ENCODE measurements at regions of chr1 and their contacts with region 1.

Region 1: GRCh38 chr1:147236959-147237826 is 5.3 kb upstream of the CHD1L start:
- DNase-seq: no peak
- H3K4me3 ChIP-seq: no peak overlapping the region
- H3K27ac ChIP-seq: no peak overlapping the region
- H3K4me1 ChIP-seq: peaks cover 6 to 17% of the 10 kb centered on the region in 2 donors
- H3K27me3 ChIP-seq: no peaks in the 10 kb centered on the region
- CTCF ChIP-seq: no peak
- POLR2A ChIP-seq: no peak

Region 2: GRCh38 chr1:147172168-147172992 is 64.8 kb before region 1 on chr1 and contains the start of gene PRKAB2:
- intact Hi-C with region 1: loop called (anchors 5 kb)
- DNase-seq: peak; percentile 97 to 98
- H3K4me3 ChIP-seq: peak within 1 kb of the TSS; percentile 77 to 90 (median 79)
- H3K27ac ChIP-seq: peak within 1 kb of the TSS; percentile 78 to 95 (median 92)
- H3K4me1 ChIP-seq: peaks cover 8 to 18% of the 10 kb centered on the region in 2 donors
- H3K27me3 ChIP-seq: no peaks in the 10 kb centered on the region
- CTCF ChIP-seq: peak; percentile 68 to 97 (median 92)
- POLR2A ChIP-seq: peak in 1 of 2 donors; percentile 80
- total RNA-seq, gene PRKAB2: 9.9 to 13.7 (median 12.8) TPM

Measured in thyroid gland (tissue), 4 donors.